Motor neuron (in vitro differentiated cells): ENCODE measurements at regions of chr2 and their contacts with region 1.

Region 1: GRCh38 chr2:179751163-179751809 is 110.1 kb downstream of the ZNF385B start:
- ATAC-seq: peak; percentile 39 to 67 (median 56)
- H3K4me3 ChIP-seq: no peak overlapping the region
- H3K27ac ChIP-seq: no peak overlapping the region
- H3K4me1 ChIP-seq: peaks cover 0 to 8% of the 10 kb centered on the region in 2 donors

Region 2: DNA sequence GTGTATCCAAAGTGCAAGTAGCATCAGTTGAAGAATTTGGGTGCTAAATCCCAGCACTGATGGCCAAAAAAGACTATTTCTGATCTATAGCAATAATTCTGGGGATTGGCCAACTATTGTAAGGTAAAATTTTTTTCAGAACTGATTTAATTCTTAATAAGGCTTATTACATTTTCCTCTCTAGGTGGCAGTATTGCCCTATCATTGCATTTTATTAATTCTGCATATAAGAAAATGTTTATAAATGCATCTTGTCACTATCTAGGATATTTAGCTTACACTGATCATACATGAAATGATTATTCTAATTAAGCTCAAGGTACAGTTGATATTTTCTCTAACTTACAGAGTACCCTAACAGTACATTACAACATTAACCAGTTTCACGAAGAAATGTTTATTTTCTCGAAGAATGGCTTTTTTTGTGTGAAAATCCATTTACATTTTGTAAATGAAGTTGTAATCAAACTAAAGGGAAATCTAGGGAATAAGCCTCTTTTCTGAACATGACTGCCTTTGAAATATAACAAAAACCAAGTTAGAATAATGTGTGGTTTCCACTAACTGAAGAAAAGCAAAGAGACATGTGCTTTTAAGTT is 955.1 kb before region 1 on chr2:
- in situ Hi-C with region 1: loop called in 2 of 9 experiments (anchors 25 kb)
- ATAC-seq: no peak
- H3K4me3 ChIP-seq: no peak overlapping the region
- H3K27ac ChIP-seq: no peak overlapping the region
- H3K4me1 ChIP-seq: no peaks in the 10 kb centered on the region

Region 3: DNA sequence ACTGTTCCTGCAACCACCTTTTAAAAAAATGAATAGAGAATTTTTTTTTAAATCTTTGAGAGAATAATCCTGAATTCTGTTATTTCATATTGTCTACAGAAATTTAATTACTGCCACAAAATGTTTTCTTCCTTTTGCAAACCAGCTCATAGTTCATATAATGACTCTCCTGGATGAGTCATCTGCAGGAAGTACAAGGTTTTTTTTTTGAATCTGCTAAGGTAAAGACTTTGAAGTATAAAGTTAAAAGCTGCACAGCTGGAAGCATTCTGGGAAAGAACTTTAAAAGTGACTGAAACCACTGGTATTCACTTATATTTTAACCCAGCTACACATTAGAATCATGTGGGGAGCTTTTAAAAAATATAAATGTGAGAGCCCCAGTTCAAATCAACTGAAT is 512.1 kb before region 1 on chr2:
- in situ Hi-C with region 1: loop called in 1 of 9 experiments (anchors 25 kb)
- ATAC-seq: no peak
- H3K4me3 ChIP-seq: no peak overlapping the region
- H3K27ac ChIP-seq: no peak overlapping the region
- H3K4me1 ChIP-seq: peaks cover 0 to 5% of the 10 kb centered on the region in 2 donors

Region 4: DNA sequence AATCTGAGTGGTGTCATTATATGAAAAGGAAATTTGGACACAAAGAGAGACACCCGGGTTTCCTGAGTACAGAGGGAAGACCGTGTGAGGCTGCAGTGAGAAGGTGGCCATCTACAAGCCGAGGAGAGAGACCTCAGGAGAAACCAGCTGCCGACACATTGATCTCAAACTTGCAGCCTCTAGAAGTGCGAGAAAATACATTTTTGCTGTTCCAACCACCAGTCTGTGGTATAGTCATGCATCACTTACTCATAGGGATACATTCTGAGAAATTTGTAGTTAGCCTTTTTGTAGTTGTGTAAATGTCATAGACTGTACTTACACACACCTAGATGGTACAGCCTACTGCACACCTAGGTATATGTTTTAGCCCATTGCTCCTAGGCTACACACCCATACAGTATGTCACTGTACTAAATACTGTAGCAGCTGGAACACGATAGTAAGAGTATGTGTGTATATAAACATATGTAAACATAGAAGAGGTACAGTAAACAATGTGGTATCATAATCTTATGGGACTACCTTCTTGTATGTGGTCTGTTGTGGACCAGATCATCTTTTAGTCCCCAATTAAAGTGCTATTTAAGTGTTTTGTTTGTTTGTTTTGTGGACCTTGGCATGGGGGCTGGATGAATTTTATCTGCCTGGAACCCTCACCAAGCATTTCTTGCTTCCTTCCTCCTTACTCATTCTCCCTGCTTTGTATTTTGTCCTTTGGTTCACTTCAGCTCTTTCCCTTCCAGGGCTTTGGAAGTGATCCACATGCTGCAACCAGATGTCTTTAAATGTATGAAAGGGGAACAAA is 448.3 kb before region 1 on chr2:
- in situ Hi-C with region 1: no loop called
- ATAC-seq: no peak
- H3K4me3 ChIP-seq: no peak overlapping the region
- H3K27ac ChIP-seq: no peak overlapping the region
- H3K4me1 ChIP-seq: no peaks in the 10 kb centered on the region

Region 5: DNA sequence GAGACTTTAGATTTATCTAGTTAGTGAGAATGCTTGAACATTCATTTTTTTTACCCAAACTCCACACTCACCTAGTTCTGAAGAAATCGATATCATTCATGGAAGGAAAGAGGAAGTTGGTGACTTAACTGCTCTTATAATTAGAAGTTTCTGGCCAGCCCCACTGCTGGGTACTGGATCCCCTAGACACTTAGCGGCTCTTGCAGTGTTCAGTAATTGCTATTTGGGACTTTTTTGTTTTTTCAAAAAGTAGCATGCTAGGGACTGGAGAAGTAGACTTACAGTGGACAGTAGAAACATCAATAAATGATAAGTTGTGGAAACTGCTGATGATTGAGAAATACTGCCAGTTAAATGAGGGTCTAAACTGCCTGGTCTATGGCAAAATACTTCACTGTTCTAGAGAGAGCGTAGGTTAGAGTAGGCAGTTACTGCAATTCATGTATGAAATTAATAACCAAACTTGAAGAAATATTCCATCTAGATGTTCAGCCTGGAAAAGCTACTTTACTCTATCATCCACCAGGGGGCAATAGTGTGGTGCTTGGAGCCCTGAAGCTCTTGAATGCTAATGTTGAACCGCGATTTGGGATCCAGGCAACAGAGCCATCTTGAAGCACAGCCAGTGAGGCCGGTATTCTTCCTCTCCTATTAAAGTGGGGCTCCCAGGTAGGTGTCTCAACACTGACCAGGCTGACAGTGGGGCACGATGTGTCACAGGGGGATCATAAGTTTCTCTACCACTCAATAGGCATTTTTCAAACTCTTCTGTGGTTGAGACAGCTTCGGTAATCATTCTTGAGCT is 340.5 kb before region 1 on chr2:
- in situ Hi-C with region 1: loop called in 6 of 9 experiments (anchors 10 to 25 kb)
- ATAC-seq: peak in 4 of 8 experiments; percentile 28 to 71 (median 66)
- H3K4me3 ChIP-seq: no peak overlapping the region
- H3K27ac ChIP-seq: no peak overlapping the region
- H3K4me1 ChIP-seq: no peaks in the 10 kb centered on the region

Region 6: GRCh38 chr2:179422037-179422643 is 329.1 kb before region 1 on chr2:
- in situ Hi-C with region 1: loop called in 8 of 9 experiments (anchors 10 to 25 kb)
- ATAC-seq: peak; percentile 50 to 88 (median 71)
- H3K4me3 ChIP-seq: no peak overlapping the region
- H3K27ac ChIP-seq: no peak overlapping the region
- H3K4me1 ChIP-seq: peaks cover 0 to 10% of the 10 kb centered on the region in 2 donors

Region 7: GRCh38 chr2:179440642-179441251 is 310.5 kb before region 1 on chr2:
- in situ Hi-C with region 1: loop called in 2 of 9 experiments (anchors 25 kb)
- ATAC-seq: no peak
- H3K4me3 ChIP-seq: no peak overlapping the region
- H3K27ac ChIP-seq: no peak overlapping the region
- H3K4me1 ChIP-seq: peaks cover 6 to 20% of the 10 kb centered on the region in 2 donors